IMR-90 (cell line): ENCODE measurements at regions of chr4 and their contacts with region 1.

Region 1: GRCh38 chr4:7811536-7812191 is 128.0 kb downstream of the AFAP1 start:
- DNase-seq: peak; percentile 95
- ATAC-seq: peak; percentile 79
- H3K4me3 ChIP-seq: no peak overlapping the region
- H3K27ac ChIP-seq: peak overlapping the region; percentile 96
- H3K4me1 ChIP-seq: peaks cover 47% of the 10 kb centered on the region
- H3K27me3 ChIP-seq: no peaks in the 10 kb centered on the region
- CTCF ChIP-seq: no peak
- POLR2A ChIP-seq: peak; percentile 54; the same call in 1 of the 2 replicates
- RAD21 ChIP-seq: no peak

Region 2: DNA sequence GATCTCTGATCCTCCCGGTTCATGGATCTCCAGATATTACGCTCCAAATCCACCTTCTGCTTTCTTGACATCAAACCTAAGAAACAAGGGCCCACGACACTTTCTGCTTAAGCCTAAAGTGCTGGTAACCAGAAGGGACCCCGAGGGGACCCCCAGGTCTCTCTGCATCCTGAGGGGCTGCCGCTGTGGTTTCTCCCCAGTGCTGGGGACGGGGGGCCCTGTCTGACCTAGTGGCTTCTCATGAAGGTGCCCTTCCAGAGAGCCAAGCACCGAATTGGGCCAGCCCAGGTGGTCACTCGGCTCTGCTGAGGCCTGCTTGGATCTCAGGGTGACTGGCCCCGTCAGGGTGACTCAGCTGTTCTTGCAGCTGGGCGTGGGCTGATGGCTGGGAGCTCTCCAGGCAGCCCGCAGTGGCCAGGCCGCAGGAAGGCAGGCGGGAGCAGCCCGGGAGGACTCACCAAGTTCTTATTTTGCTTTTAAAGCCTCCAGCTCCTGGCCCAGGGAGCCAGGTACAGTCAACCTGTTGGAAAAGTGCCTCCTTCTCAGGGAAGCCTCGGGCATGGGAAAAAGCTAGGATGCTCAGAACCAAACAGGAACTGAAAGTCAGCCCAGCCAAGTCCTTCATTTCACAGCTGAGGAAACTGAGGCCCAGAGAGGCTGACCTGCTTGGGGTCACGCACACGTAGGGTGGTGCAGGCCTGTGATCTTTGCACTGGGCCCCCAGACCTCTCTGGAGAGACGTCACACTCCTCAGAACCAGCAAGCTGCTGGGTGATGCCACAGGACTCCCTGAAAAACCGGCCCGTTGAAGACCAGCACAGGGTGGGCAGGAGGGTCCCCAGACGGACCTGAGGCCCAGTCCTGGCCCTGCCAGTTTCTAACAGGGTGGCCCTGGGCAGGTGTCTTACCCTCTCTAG is 1079.0 kb before region 1 on chr4:
- CTCF ChIA-PET with region 1: no interaction called
- POLR2A ChIA-PET with region 1: no interaction called
- dilution Hi-C with region 1: no loop called
- in situ Hi-C with region 1: no loop called
- intact Hi-C with region 1: no loop called
- DNase-seq: peak; percentile 94
- ATAC-seq: peak; percentile 99
- H3K4me3 ChIP-seq: no peak overlapping the region
- H3K27ac ChIP-seq: peak overlapping the region; percentile 76
- H3K4me1 ChIP-seq: peaks cover 9% of the 10 kb centered on the region
- H3K27me3 ChIP-seq: no peaks in the 10 kb centered on the region; the same call in 1 of the 2 replicates
- CTCF ChIP-seq: no peak
- POLR2A ChIP-seq: peak; percentile 20; the same call in 1 of the 2 replicates
- RAD21 ChIP-seq: 0 out of 2 replicates have a peak, but pooled peaks have one; percentile 17

Region 3: GRCh38 chr4:7861440-7861881 is 49.8 kb after region 1 on chr4:
- CTCF ChIA-PET with region 1: no interaction called
- POLR2A ChIA-PET with region 1: no interaction called
- dilution Hi-C with region 1: no loop called
- in situ Hi-C with region 1: no loop called
- intact Hi-C with region 1: loop called (anchors 5 kb)
- DNase-seq: peak; percentile 97
- ATAC-seq: peak; percentile 68
- H3K4me3 ChIP-seq: no peak overlapping the region
- H3K27ac ChIP-seq: peak overlapping the region; percentile 95
- H3K4me1 ChIP-seq: peaks cover 38% of the 10 kb centered on the region
- H3K27me3 ChIP-seq: no peaks in the 10 kb centered on the region
- CTCF ChIP-seq: no peak
- POLR2A ChIP-seq: no peak
- RAD21 ChIP-seq: peak; percentile 26; the same call in 1 of the 2 replicates

Region 4: GRCh38 chr4:7902101-7902553 is 90.5 kb after region 1 on chr4:
- CTCF ChIA-PET with region 1: no interaction called
- POLR2A ChIA-PET with region 1: no interaction called
- dilution Hi-C with region 1: no loop called
- in situ Hi-C with region 1: no loop called
- intact Hi-C with region 1: no loop called
- DNase-seq: no peak
- ATAC-seq: no peak
- H3K4me3 ChIP-seq: no peak overlapping the region
- H3K27ac ChIP-seq: no peak overlapping the region
- H3K4me1 ChIP-seq: peaks cover 41% of the 10 kb centered on the region
- H3K27me3 ChIP-seq: no peaks in the 10 kb centered on the region
- CTCF ChIP-seq: no peak
- POLR2A ChIP-seq: no peak
- RAD21 ChIP-seq: no peak

Region 5: DNA sequence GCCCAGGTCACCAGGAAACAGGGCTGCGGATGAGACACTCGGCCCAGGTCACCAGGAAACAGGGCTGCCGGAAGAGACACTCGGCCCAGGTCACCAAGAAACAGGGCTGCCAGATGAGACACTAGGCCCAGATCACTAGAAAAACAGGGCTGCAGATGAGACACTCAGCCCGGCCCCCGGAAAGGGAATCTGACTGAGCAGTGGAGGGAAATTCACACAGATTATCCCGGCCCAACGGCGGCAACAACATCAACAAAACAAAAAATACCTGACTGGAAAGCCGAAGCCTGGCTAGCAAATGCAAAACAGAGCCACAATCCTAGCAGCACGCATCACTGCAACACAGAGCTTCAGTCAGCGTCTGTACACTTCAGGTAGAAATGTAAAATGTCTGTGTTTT is 107.3 kb after region 1 on chr4:
- CTCF ChIA-PET with region 1: no interaction called
- POLR2A ChIA-PET with region 1: no interaction called
- dilution Hi-C with region 1: no loop called
- in situ Hi-C with region 1: no loop called
- intact Hi-C with region 1: no loop called
- DNase-seq: no peak
- ATAC-seq: no peak
- H3K4me3 ChIP-seq: no peak overlapping the region
- H3K27ac ChIP-seq: no peak overlapping the region
- H3K4me1 ChIP-seq: peaks cover 14% of the 10 kb centered on the region
- H3K27me3 ChIP-seq: no peaks in the 10 kb centered on the region
- CTCF ChIP-seq: no peak
- POLR2A ChIP-seq: no peak
- RAD21 ChIP-seq: no peak

Region 6: DNA sequence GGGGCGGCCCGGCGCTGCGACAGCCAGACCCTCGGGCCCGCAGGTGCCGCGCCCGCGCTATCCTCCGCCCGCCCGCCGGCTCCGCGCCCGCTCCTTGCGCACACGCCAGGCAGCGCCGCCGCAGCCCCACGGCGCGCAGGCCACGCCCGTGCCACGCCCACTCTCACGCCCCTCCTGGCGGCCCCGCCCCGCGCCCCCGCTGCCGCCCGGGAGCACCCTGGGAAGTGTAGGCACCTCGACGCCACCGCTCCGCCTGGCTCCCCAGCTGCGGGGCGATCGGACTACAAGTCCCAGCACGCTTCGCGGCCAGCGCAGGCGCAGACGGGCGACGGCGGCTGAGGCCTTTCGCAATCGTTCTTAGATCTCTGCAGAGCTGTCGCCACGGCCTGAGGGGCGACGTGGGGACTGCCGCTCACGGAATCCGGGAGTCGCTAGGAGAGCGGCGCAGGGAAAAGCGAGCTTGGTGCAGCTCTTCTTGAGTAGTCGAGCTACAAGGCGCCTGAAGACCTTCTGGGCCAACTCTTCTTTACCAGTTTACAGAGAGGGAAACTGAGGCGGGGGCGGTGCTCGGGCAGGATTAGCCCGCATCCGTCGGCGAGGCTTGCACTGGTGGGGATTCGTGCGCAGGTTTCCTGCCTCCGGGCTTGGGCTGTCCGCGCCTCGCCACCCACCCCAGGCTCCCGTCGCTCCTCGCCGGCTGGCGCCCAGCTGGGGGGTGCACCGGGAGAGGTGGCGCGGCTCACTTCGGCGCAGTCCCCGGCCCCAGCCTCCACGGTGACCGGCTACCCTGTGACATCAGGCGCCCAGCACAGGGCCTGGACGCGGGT is 347.3 kb after region 1 on chr4 and contains the start of gene ABLIM2:
- CTCF ChIA-PET with region 1: no interaction called
- POLR2A ChIA-PET with region 1: no interaction called
- dilution Hi-C with region 1: no loop called
- in situ Hi-C with region 1: no loop called
- intact Hi-C with region 1: no loop called
- DNase-seq: peak; percentile 96
- ATAC-seq: peak; percentile 100
- H3K4me3 ChIP-seq: peak within 1 kb of the TSS; percentile 83
- H3K27ac ChIP-seq: peak within 1 kb of the TSS; percentile 46; the same call in 1 of the 2 replicates
- H3K4me1 ChIP-seq: peaks cover 5% of the 10 kb centered on the region; the same call in 1 of the 2 replicates
- H3K27me3 ChIP-seq: peaks cover 57% of the 10 kb centered on the region
- CTCF ChIP-seq: no peak
- POLR2A ChIP-seq: no peak
- RAD21 ChIP-seq: no peak
- total RNA-seq, gene ABLIM2: under 0.01 TPM in 2 replicates